ENCODE measurements at regions of chr11 and their contacts with region 1.

Region 1: GRCh38 chr11:119666463-119667131 is 62.4 kb downstream of the NECTIN1 start:
- DNase-seq: peak; percentile 76 to 93 (median 92)
- ATAC-seq: peak; percentile 92 to 95
- H3K4me3 ChIP-seq: no peak overlapping the region
- H3K27ac ChIP-seq: no peak overlapping the region
- H3K4me1 ChIP-seq: no peaks in the 10 kb centered on the region
- H3K27me3 ChIP-seq: no peaks in the 10 kb centered on the region

Region 2: DNA sequence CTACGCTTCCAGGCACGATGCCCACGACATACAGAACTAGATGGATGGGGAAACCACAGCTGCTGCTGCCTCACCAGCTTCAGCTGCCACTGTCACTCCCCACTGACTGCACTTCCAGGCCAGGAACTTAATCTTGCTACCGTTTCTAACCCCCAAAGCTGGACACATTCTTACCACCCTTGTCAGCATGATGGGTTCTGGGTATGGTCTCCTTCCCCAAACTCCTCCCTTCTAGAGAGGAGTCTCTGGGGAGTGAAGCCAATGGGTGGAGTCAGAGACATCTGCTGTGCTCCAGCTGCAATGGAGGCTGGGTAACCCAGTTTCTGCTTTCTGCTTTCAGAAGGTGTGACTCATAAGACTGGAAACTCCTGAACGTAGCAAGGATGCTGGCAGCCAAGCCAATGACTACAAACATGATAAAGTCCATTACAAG is 156.6 kb before region 1 on chr11:
- intact Hi-C with region 1: no loop called
- DNase-seq: peak in 2 of 3 donors; percentile 61 to 72
- ATAC-seq: peak; percentile 69 to 79
- H3K4me3 ChIP-seq: no peak overlapping the region
- H3K27ac ChIP-seq: no peak overlapping the region
- H3K4me1 ChIP-seq: no peaks in the 10 kb centered on the region
- H3K27me3 ChIP-seq: no peaks in the 10 kb centered on the region

Region 3: GRCh38 chr11:119717839-119718534 is 51.4 kb after region 1 on chr11:
- intact Hi-C with region 1: no loop called
- DNase-seq: no peak
- ATAC-seq: no peak
- H3K4me3 ChIP-seq: no peak overlapping the region
- H3K27ac ChIP-seq: no peak overlapping the region
- H3K4me1 ChIP-seq: no peaks in the 10 kb centered on the region
- H3K27me3 ChIP-seq: no peaks in the 10 kb centered on the region

Region 4: GRCh38 chr11:120013325-120014270 is 347.0 kb after region 1 on chr11:
- intact Hi-C with region 1: loop called in 3 of 4 experiments (anchors 10 kb)
- DNase-seq: peak; percentile 49 to 74 (median 72)
- ATAC-seq: peak; percentile 74 to 85
- H3K4me3 ChIP-seq: no peak overlapping the region
- H3K27ac ChIP-seq: no peak overlapping the region
- H3K4me1 ChIP-seq: no peaks in the 10 kb centered on the region
- H3K27me3 ChIP-seq: no peaks in the 10 kb centered on the region